Activated naive CD4-positive, alpha-beta T cell treated with anti-CD3 and anti-CD28 coated beads for 36 hours (primary cell): ENCODE measurements at regions of chr6 and their contacts with region 1.

Region 1: GRCh38 chr6:1381481-1382330 is 7.7 kb upstream of the FOXF2 start:
- DNase-seq: peak; percentile 63
- H3K4me3 Mint-ChIP-seq: no peak overlapping the region
- H3K27ac Mint-ChIP-seq: no peak overlapping the region
- H3K4me1 Mint-ChIP-seq: peaks cover 41% of the 10 kb centered on the region
- H3K27me3 Mint-ChIP-seq: peaks cover 74% of the 10 kb centered on the region

Region 2: DNA sequence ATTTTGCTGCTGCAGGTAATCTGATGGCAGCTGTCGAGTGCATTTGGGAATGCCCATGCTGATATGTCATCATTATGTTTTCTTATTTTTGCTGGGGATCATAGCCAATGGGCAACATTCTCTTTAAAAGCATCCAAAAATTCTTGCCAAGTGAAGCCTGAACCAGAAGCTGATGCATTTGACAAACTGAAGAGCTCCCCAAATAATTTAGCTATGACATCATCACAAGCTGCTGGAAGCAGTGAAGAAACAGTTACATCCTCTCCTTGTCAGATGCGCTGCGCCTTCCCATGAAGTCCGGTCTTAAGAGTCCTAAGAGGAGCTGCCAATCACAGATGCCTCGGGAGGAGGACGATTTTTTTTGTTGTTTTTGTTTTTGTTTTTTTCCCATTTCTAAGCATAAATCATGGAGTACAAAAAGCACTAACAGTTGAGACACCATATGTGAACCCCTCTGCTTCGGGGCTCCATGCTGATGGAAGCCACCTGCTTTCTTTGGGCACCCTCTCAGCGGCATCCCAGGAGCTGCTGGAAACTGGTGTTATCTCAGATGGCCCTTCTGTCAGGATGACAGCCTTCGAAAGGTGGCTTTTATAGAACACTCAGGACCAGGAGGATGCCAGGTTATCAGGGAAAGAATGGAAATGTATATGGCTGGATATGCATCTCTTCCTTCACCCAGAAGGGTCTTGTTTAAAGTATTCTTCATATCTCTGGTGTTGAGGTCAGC is 125.9 kb before region 1 on chr6:
- CTCF ChIA-PET with region 1: no interaction called
- intact Hi-C with region 1: no loop called
- DNase-seq: no peak
- H3K4me3 Mint-ChIP-seq: no peak overlapping the region
- H3K27ac Mint-ChIP-seq: no peak overlapping the region
- H3K4me1 Mint-ChIP-seq: no peaks in the 10 kb centered on the region
- H3K27me3 Mint-ChIP-seq: peaks cover 15% of the 10 kb centered on the region

Region 3: GRCh38 chr6:1311400-1312202 is 70.1 kb before region 1 on chr6 and contains the start of gene FOXQ1:
- CTCF ChIA-PET with region 1: no interaction called
- intact Hi-C with region 1: loop called (anchors 2 kb)
- DNase-seq: no peak
- H3K4me3 Mint-ChIP-seq: peak within 1 kb of the TSS; percentile 69
- H3K27ac Mint-ChIP-seq: no peak within 1 kb of the TSS
- H3K4me1 Mint-ChIP-seq: peaks cover 28% of the 10 kb centered on the region
- H3K27me3 Mint-ChIP-seq: peaks cover 61% of the 10 kb centered on the region
- total RNA-seq, gene FOXQ1: not detected